Endothelial cell of umbilical vein (primary cell): ENCODE measurements at regions of chr1 and their contacts with region 1.

Region 1: GRCh38 chr1:200075938-200076550 is 48.5 kb downstream of the NR5A2 start:
- DNase-seq: peak; percentile 99
- H3K4me3 ChIP-seq: peak overlapping the region in 1 of 3 experiments; percentile 50
- H3K27ac ChIP-seq: peak overlapping the region; percentile 94
- H3K4me1 ChIP-seq: peaks cover 45% of the 10 kb centered on the region
- H3K27me3 ChIP-seq: no peaks in the 10 kb centered on the region
- CTCF ChIP-seq: no peak
- POLR2A ChIP-seq: peak; percentile 53

Region 2: GRCh38 chr1:199272643-199273086 is 803.4 kb before region 1 on chr1:
- CTCF ChIA-PET with region 1: no interaction called
- POLR2A ChIA-PET with region 1: no interaction called
- dilution Hi-C with region 1: no loop called
- intact Hi-C with region 1: loop called (anchors 1 kb)
- DNase-seq: peak; percentile 97
- H3K4me3 ChIP-seq: no peak overlapping the region
- H3K27ac ChIP-seq: peak overlapping the region; percentile 97
- H3K4me1 ChIP-seq: peaks cover 25% of the 10 kb centered on the region
- H3K27me3 ChIP-seq: no peaks in the 10 kb centered on the region
- CTCF ChIP-seq: no peak
- POLR2A ChIP-seq: peak; percentile 49

Region 3: GRCh38 chr1:199733125-199733524 is 342.9 kb before region 1 on chr1:
- CTCF ChIA-PET with region 1: no interaction called
- POLR2A ChIA-PET with region 1: no interaction called
- dilution Hi-C with region 1: no loop called
- intact Hi-C with region 1: loop called (anchors 5 kb)
- DNase-seq: peak; percentile 54
- H3K4me3 ChIP-seq: no peak overlapping the region
- H3K27ac ChIP-seq: peak overlapping the region; percentile 63
- H3K4me1 ChIP-seq: peaks cover 38% of the 10 kb centered on the region
- H3K27me3 ChIP-seq: no peaks in the 10 kb centered on the region
- CTCF ChIP-seq: no peak
- POLR2A ChIP-seq: no peak

Region 4: DNA sequence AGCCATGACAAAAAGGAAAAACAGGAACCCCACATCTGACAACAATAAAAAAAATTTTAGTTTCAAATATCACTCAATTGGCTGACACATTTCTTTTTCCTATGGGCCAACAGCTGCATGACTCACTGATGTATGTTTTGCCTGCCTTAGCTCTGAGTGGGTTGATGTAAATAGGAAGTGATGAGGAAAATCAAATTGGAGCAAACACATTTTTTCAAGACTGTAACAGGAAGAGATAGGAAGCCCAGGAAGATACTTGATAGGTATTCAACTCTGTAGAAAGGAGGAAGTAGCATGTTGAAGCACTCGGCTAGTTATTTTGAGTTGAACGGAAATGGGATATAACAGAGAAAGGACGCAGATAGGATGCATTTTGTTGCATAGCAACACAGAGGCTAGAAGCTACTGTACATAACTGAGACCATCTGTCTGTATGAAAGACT is 216.5 kb before region 1 on chr1:
- CTCF ChIA-PET with region 1: no interaction called
- POLR2A ChIA-PET with region 1: no interaction called
- dilution Hi-C with region 1: no loop called
- intact Hi-C with region 1: loop called (anchors 1 kb)
- DNase-seq: peak; percentile 97
- H3K4me3 ChIP-seq: no peak overlapping the region
- H3K27ac ChIP-seq: peak overlapping the region; percentile 31
- H3K4me1 ChIP-seq: peaks cover 42% of the 10 kb centered on the region
- H3K27me3 ChIP-seq: no peaks in the 10 kb centered on the region
- CTCF ChIP-seq: no peak
- POLR2A ChIP-seq: no peak

Region 5: DNA sequence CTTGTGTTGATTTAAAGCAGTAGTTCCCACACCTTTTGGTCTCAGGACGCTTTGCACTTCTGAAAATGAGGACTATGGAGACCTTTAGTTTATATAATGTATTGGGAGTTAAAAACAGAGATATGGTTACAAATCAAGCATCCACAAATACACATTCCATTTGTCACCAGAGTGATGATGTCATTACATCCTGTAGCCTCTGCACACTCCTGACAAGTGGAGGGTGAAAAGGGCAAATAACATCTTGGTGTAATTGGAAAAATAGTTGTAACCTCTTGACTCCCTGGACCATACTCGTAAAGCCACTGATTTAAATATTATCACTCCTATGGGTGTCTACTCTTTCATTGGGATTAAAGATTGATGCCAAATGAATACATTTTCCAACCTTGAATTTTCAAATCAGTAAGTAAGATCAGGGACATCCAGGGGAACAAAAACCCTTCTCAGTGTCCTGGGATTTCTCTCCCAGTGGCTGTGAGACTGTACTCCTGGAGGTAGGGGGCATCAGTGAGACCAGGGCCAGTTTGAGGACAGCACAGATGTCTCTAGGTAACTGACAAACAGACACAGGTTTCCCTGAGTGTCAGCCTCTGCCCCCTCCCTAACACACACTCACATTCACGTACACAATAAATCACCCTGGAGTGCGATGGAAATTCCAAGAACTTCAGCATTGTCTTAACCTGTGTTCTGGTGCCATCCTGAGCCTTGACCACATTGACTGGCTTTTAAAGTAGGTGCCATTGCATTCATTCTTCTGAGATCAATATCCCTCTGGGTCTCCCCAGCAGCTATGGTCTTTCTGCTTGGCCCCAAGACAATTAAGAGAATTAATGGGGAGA is 14.4 kb after region 1 on chr1:
- CTCF ChIA-PET with region 1: interaction called, 5 read pairs
- POLR2A ChIA-PET with region 1: no interaction called
- dilution Hi-C with region 1: no loop called
- intact Hi-C with region 1: loop called (anchors 1 kb)
- DNase-seq: peak; percentile 83
- H3K4me3 ChIP-seq: no peak overlapping the region
- H3K27ac ChIP-seq: no peak overlapping the region
- H3K4me1 ChIP-seq: peaks cover 10% of the 10 kb centered on the region
- H3K27me3 ChIP-seq: no peaks in the 10 kb centered on the region
- CTCF ChIP-seq: peak in 1 of 2 donors; percentile 29
- POLR2A ChIP-seq: no peak

Region 6: GRCh38 chr1:200154069-200154767 is 78.2 kb after region 1 on chr1:
- CTCF ChIA-PET with region 1: no interaction called
- POLR2A ChIA-PET with region 1: no interaction called
- dilution Hi-C with region 1: no loop called
- intact Hi-C with region 1: no loop called
- DNase-seq: peak; percentile 94
- H3K4me3 ChIP-seq: no peak overlapping the region
- H3K27ac ChIP-seq: no peak overlapping the region
- H3K4me1 ChIP-seq: peaks cover 12% of the 10 kb centered on the region
- H3K27me3 ChIP-seq: no peaks in the 10 kb centered on the region
- CTCF ChIP-seq: no peak
- POLR2A ChIP-seq: no peak

Region 7: DNA sequence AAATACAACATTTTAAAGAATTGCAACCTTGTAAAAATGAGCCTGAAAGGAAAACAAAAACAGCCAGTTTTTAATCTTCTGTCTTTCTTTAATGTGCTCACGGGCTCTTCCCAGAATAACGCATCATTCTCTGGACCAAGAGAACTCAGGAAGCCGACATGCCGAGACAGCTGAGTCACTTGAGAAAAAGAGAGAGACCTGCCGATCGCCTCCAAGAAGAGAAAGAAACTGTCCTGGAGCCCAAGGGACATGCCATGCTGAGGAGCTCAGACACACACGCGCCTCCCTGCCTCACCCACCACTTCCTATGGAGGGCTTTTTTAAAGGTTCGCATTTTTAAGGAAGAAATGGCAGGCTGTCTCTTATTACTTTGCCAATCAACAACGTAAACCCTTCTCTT is 157.3 kb after region 1 on chr1:
- CTCF ChIA-PET with region 1: no interaction called
- POLR2A ChIA-PET with region 1: no interaction called
- dilution Hi-C with region 1: no loop called
- intact Hi-C with region 1: loop called (anchors 2 kb)
- DNase-seq: no peak
- H3K4me3 ChIP-seq: no peak overlapping the region
- H3K27ac ChIP-seq: no peak overlapping the region
- H3K4me1 ChIP-seq: peaks cover 18% of the 10 kb centered on the region
- H3K27me3 ChIP-seq: no peaks in the 10 kb centered on the region
- CTCF ChIP-seq: no peak
- POLR2A ChIP-seq: no peak

Region 8: DNA sequence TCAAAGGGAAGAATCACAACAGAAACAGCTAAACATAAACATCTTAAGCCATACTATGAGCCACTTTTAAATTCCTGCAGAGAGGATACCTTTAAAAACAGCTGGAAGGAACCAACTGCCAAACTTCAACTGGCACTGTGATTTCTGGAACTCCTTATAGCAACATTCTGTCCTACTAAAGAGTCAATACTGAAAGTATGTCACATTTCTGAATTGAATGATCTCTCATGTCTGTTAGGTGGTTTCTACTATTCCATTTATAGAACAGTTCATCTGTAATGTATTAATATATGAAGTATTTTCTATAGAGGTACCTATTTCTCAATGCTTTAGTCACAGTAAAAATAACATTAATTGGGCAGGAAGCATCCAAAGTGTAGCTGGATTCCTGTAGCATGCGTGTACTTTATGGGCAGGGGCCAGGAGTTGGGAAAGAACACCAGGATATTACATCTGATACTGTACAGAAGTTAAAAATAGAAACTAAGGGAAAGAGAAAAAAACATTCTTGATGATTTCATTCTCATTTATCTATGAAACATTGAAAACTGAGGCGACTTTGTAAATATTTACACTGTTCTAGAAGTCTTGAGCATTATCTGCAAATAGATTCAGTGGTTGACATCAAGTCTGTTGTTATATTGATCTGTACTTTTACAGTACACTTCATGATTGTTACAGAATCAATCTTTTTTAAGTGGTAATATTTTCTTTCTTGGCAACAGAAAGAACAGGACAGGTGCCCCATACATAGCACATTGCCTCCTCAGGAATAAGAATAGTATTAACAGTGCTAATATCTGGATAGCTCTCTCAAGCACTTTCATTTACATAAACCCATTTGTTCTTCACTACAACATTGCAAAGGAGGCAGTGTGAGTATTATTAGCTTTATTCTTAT is 339.9 kb after region 1 on chr1:
- CTCF ChIA-PET with region 1: no interaction called
- POLR2A ChIA-PET with region 1: no interaction called
- dilution Hi-C with region 1: no loop called
- intact Hi-C with region 1: loop called (anchors 5 kb)
- DNase-seq: peak; percentile 94
- H3K4me3 ChIP-seq: peak overlapping the region in 1 of 3 experiments; percentile 55
- H3K27ac ChIP-seq: peak overlapping the region; percentile 99
- H3K4me1 ChIP-seq: peaks cover 24% of the 10 kb centered on the region
- H3K27me3 ChIP-seq: no peaks in the 10 kb centered on the region
- CTCF ChIP-seq: no peak
- POLR2A ChIP-seq: no peak